Natural killer cell (primary cell): ENCODE measurements at regions of chr6 and their contacts with region 1.

Region 1: GRCh38 chr6:5866547-5867101 is 140.1 kb downstream of the NRN1 start:
- DNase-seq: peak in 1 of 2 donors; percentile 52
- ATAC-seq: peak; percentile 52 to 62 (median 60)
- H3K4me3 ChIP-seq: peak overlapping the region; percentile 6
- H3K4me3 Mint-ChIP-seq: peak overlapping the region; percentile 86
- H3K27ac ChIP-seq: peak overlapping the region; percentile 78
- H3K27ac Mint-ChIP-seq: peak overlapping the region; percentile 92 to 95
- H3K4me1 ChIP-seq: peaks cover 22% of the 10 kb centered on the region
- H3K4me1 Mint-ChIP-seq: peaks cover 48 to 50% of the 10 kb centered on the region in 2 donors
- H3K27me3 ChIP-seq: no peaks in the 10 kb centered on the region
- H3K27me3 Mint-ChIP-seq: no peaks in the 10 kb centered on the region
- CTCF ChIP-seq: no peak

Region 2: DNA sequence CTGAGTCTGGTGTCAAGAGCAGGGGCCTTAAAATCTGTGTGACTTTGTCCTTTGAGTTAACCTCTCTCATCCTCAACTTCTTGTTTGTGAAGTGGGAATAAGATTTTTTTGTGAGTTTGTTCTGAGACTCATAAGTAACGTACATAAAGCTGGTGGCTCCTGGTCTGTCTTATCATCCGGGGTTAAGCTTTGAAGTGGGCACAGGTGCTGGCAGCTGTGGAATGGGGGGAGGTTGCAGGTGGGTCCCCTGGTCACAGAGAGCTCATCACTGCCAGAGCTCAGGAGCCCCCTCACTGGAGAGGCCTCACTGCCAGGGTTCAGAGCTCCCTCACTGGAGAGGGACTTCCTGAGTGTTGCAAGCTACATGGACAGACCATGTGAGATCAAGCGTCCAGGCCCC is 34.0 kb before region 1 on chr6:
- intact Hi-C with region 1: loop called (anchors 5 kb)
- DNase-seq: no peak
- ATAC-seq: no peak
- H3K4me3 ChIP-seq: no peak overlapping the region
- H3K4me3 Mint-ChIP-seq: peak overlapping the region; percentile 80
- H3K27ac ChIP-seq: peak overlapping the region; percentile 72
- H3K27ac Mint-ChIP-seq: peak overlapping the region; percentile 95
- H3K4me1 ChIP-seq: peaks cover 41% of the 10 kb centered on the region
- H3K4me1 Mint-ChIP-seq: peaks cover 45 to 57% of the 10 kb centered on the region in 2 donors
- H3K27me3 ChIP-seq: no peaks in the 10 kb centered on the region
- H3K27me3 Mint-ChIP-seq: no peaks in the 10 kb centered on the region
- CTCF ChIP-seq: no peak